HepG2 (cell line): ENCODE measurements at regions of chr12 and their contacts with region 1.

Region 1: GRCh38 chr12:31369712-31370521 is 44.0 kb upstream of the SINHCAF start:
- DNase-seq: peak; percentile 24
- ATAC-seq: peak; percentile 59
- H3K4me3 ChIP-seq: peak overlapping the region; percentile 54 to 59 (median 57)
- H3K27ac ChIP-seq: peak overlapping the region; percentile 58
- H3K4me1 ChIP-seq: peaks cover 37% of the 10 kb centered on the region
- H3K27me3 ChIP-seq: no peaks in the 10 kb centered on the region
- CTCF ChIP-seq: no peak
- EP300 ChIP-seq: no peak
- POLR2A ChIP-seq: no peak
- RAD21 ChIP-seq: no peak

Region 2: GRCh38 chr12:31353750-31354708 is 15.9 kb before region 1 on chr12:
- CTCF ChIA-PET with region 1: no interaction called
- POLR2A ChIA-PET with region 1: interaction called, 16 read pairs
- in situ Hi-C with region 1: no loop called
- intact Hi-C with region 1: no loop called
- DNase-seq: no peak
- ATAC-seq: no peak
- H3K4me3 ChIP-seq: no peak overlapping the region; a peak in 1 of 6 replicates
- H3K27ac ChIP-seq: no peak overlapping the region
- H3K4me1 ChIP-seq: peaks cover 29% of the 10 kb centered on the region
- H3K27me3 ChIP-seq: no peaks in the 10 kb centered on the region
- CTCF ChIP-seq: no peak
- EP300 ChIP-seq: no peak
- POLR2A ChIP-seq: no peak
- RAD21 ChIP-seq: no peak